CD4-positive, alpha-beta memory T cell (primary cell): ENCODE measurements at regions of chr9 and their contacts with region 1.

Region 1: GRCh38 chr9:127869310-127870152 is 7.9 kb downstream of the AK1 start:
- DNase-seq: peak; percentile 61 to 76 (median 63)
- H3K4me3 ChIP-seq: no peak overlapping the region
- H3K4me3 Mint-ChIP-seq: no peak overlapping the region
- H3K27ac ChIP-seq: no peak overlapping the region
- H3K27ac Mint-ChIP-seq: peak overlapping the region in 2 of 7 donors; percentile 31 to 53
- H3K4me1 ChIP-seq: peaks cover 20% of the 10 kb centered on the region
- H3K4me1 Mint-ChIP-seq: peaks cover 13 to 20% (median 15%) of the 10 kb centered on the region in 4 donors
- H3K27me3 ChIP-seq: no peaks in the 10 kb centered on the region
- H3K27me3 Mint-ChIP-seq: no peaks in the 10 kb centered on the region

Region 2: DNA sequence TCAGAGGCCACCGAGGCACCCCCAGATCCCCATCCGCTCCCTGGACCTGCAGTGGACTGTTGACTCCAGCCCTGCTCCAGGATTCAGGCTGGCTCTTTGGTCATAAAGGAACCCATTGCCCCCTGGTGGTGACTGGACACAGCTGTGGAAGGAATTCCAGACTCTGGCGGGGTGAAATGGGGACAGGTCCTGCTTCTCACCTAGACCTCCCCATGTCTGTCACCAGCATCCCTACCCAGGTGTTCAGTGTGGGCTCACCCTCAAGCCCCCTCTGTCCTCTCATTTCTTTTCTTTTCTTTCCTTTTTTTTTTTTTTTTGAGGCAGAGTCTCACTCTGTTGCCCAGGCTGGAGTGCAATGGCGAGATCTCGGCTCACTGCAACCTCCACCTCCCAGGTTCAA is 283.0 kb before region 1 on chr9:
- CTCF ChIA-PET with region 1: interaction called, 47 read pairs
- POLR2A ChIA-PET with region 1: no interaction called
- intact Hi-C with region 1: loop called (anchors 2 kb)
- DNase-seq: peak; percentile 53 to 56 (median 56)
- H3K4me3 ChIP-seq: no peak overlapping the region
- H3K4me3 Mint-ChIP-seq: no peak overlapping the region
- H3K27ac ChIP-seq: no peak overlapping the region
- H3K27ac Mint-ChIP-seq: peak overlapping the region in 1 of 7 donors; percentile 76
- H3K4me1 ChIP-seq: no peaks in the 10 kb centered on the region
- H3K4me1 Mint-ChIP-seq: peaks cover 0 to 3% (median 2%) of the 10 kb centered on the region in 4 donors
- H3K27me3 ChIP-seq: no peaks in the 10 kb centered on the region
- H3K27me3 Mint-ChIP-seq: peaks cover 3 to 5% of the 10 kb centered on the region in 2 donors

Region 3: DNA sequence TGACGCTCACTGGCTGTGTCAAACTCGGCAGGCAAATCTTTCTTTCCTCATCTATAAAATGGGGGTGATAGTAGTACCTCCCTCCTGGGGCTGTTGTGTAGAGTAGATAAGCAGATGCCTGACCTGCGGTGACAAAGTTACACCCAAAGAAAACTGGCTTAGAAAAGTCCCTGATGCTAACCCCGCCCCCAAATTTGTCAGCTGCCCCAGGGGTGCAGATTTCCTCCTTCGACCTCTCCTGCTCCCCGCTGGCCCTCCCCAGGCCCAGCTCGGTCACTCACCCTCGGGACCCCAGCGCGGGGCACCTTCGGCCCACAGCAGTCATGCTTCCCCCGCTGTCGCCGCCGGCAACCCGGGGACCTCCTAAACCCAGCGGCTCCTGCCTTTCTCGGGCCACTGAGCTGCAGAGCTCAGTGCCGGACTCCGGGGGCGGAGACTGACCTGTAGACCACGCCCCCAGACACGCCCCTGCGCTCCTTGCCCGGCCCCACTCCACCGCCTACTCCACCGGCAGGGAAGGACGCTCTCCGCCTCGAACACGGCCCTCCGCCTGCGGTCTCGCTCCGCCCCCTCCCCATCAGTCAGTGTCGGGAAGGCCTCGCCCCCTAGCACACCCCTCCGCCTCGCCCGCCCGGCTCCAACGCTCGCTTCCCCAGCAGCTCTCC is 98.5 kb before region 1 on chr9:
- CTCF ChIA-PET with region 1: interaction called, 24 read pairs
- POLR2A ChIA-PET with region 1: interaction called, 5 read pairs
- intact Hi-C with region 1: no loop called
- DNase-seq: peak; percentile 92 to 96 (median 95)
- H3K4me3 ChIP-seq: peak overlapping the region; percentile 50 to 78
- H3K4me3 Mint-ChIP-seq: peak overlapping the region; percentile 78 to 92 (median 88)
- H3K27ac ChIP-seq: peak overlapping the region; percentile 97
- H3K27ac Mint-ChIP-seq: peak overlapping the region; percentile 92 to 99 (median 98)
- H3K4me1 ChIP-seq: peaks cover 91% of the 10 kb centered on the region
- H3K4me1 Mint-ChIP-seq: peaks cover 41 to 78% (median 61%) of the 10 kb centered on the region in 4 donors
- H3K27me3 ChIP-seq: no peaks in the 10 kb centered on the region
- H3K27me3 Mint-ChIP-seq: no peaks in the 10 kb centered on the region

Region 4: GRCh38 chr9:127802576-127803443 is 66.7 kb before region 1 on chr9 and contains the start of gene FPGS:
- CTCF ChIA-PET with region 1: interaction called, 6 read pairs
- POLR2A ChIA-PET with region 1: interaction called, 3 read pairs
- intact Hi-C with region 1: loop called (anchors 5 kb)
- DNase-seq: peak; percentile 84 to 88 (median 87)
- H3K4me3 ChIP-seq: peak within 1 kb of the TSS; percentile 80 to 94
- H3K4me3 Mint-ChIP-seq: peak within 1 kb of the TSS; percentile 89 to 94 (median 92)
- H3K27ac ChIP-seq: peak within 1 kb of the TSS; percentile 72
- H3K27ac Mint-ChIP-seq: peak within 1 kb of the TSS; percentile 88 to 96 (median 93)
- H3K4me1 ChIP-seq: peaks cover 25% of the 10 kb centered on the region
- H3K4me1 Mint-ChIP-seq: peaks cover 4 to 38% (median 23%) of the 10 kb centered on the region in 4 donors
- H3K27me3 ChIP-seq: no peaks in the 10 kb centered on the region
- H3K27me3 Mint-ChIP-seq: no peaks in the 10 kb centered on the region
- total RNA-seq, gene FPGS: 100 to 101 TPM

Region 5: GRCh38 chr9:127899128-127899946 is 29.8 kb after region 1 on chr9 and contains the start of gene ST6GALNAC6:
- CTCF ChIA-PET with region 1: interaction called, 12 read pairs
- POLR2A ChIA-PET with region 1: interaction called, 5 read pairs
- intact Hi-C with region 1: no loop called
- DNase-seq: peak; percentile 61 to 74 (median 63)
- H3K4me3 ChIP-seq: peak within 1 kb of the TSS; percentile 68 to 79
- H3K4me3 Mint-ChIP-seq: peak within 1 kb of the TSS; percentile 87 to 92 (median 90)
- H3K27ac ChIP-seq: peak within 1 kb of the TSS; percentile 60
- H3K27ac Mint-ChIP-seq: peak within 1 kb of the TSS; percentile 47 to 91 (median 88)
- H3K4me1 ChIP-seq: peaks cover 58% of the 10 kb centered on the region
- H3K4me1 Mint-ChIP-seq: peaks cover 12 to 59% (median 37%) of the 10 kb centered on the region in 4 donors
- H3K27me3 ChIP-seq: no peaks in the 10 kb centered on the region
- H3K27me3 Mint-ChIP-seq: no peaks in the 10 kb centered on the region
- total RNA-seq, gene ST6GALNAC6: 125 to 127 TPM

Region 6: GRCh38 chr9:127916665-127917613 is 47.4 kb after region 1 on chr9 and contains the start of gene ST6GALNAC4:
- CTCF ChIA-PET with region 1: interaction called, 43 read pairs
- POLR2A ChIA-PET with region 1: interaction called, 9 read pairs
- intact Hi-C with region 1: loop called (anchors 5 kb)
- DNase-seq: peak; percentile 90 to 93 (median 91)
- H3K4me3 ChIP-seq: peak within 1 kb of the TSS; percentile 66 to 76
- H3K4me3 Mint-ChIP-seq: peak within 1 kb of the TSS; percentile 78 to 88 (median 84)
- H3K27ac ChIP-seq: peak within 1 kb of the TSS; percentile 52
- H3K27ac Mint-ChIP-seq: peak within 1 kb of the TSS; percentile 63 to 84 (median 79)
- H3K4me1 ChIP-seq: peaks cover 38% of the 10 kb centered on the region
- H3K4me1 Mint-ChIP-seq: peaks cover 12 to 65% (median 39%) of the 10 kb centered on the region in 4 donors
- H3K27me3 ChIP-seq: no peaks in the 10 kb centered on the region
- H3K27me3 Mint-ChIP-seq: no peaks in the 10 kb centered on the region
- total RNA-seq, gene ST6GALNAC4: 35.7 to 38.1 TPM

Region 7: DNA sequence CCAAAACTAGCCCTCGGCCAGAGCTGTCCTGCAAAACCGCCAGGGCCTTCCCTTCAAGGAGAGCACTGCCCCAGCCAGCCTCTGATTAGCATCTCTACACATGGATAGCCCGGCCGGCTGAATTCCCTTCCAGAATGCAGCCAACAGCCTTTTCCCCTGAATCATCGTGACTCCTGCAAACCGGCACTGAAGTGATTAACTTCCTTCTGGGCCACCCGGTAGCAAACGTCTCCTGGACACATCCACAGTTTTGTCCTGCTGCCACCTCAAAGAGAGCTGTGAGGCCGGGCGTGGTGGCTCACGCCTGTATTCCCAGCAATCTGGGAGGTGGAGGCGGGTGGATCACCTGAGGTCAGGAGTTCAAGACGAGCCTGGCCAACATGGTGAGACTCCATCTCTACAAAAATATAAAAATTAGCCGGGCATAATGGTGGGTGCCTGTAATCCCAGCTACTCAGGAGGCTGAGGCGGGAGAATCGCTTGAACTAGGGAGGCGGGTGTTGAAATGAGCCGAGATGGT is 132.3 kb after region 1 on chr9:
- CTCF ChIA-PET with region 1: no interaction called
- POLR2A ChIA-PET with region 1: no interaction called
- intact Hi-C with region 1: no loop called
- DNase-seq: no peak
- H3K4me3 ChIP-seq: no peak overlapping the region
- H3K4me3 Mint-ChIP-seq: no peak overlapping the region
- H3K27ac ChIP-seq: no peak overlapping the region
- H3K27ac Mint-ChIP-seq: peak overlapping the region in 3 of 7 donors; percentile 19 to 68 (median 65)
- H3K4me1 ChIP-seq: peaks cover 37% of the 10 kb centered on the region
- H3K4me1 Mint-ChIP-seq: peaks cover 13 to 50% (median 32%) of the 10 kb centered on the region in 4 donors
- H3K27me3 ChIP-seq: no peaks in the 10 kb centered on the region
- H3K27me3 Mint-ChIP-seq: no peaks in the 10 kb centered on the region